ENCODE measurements at regions of chr1 and their contacts with region 1.

Region 1: GRCh38 chr1:211258756-211259637 is at the start of gene RCOR3:
- DNase-seq: peak; percentile 87 to 91 (median 89)
- H3K4me3 ChIP-seq: peak within 1 kb of the TSS; percentile 70 to 75
- H3K4me3 Mint-ChIP-seq: peak within 1 kb of the TSS; percentile 87 to 96 (median 91)
- H3K27ac ChIP-seq: peak within 1 kb of the TSS; percentile 77
- H3K27ac Mint-ChIP-seq: peak within 1 kb of the TSS; percentile 89 to 98 (median 92)
- H3K4me1 ChIP-seq: peaks cover 21% of the 10 kb centered on the region
- H3K4me1 Mint-ChIP-seq: peaks cover 10 to 26% (median 18%) of the 10 kb centered on the region in 4 donors
- H3K27me3 ChIP-seq: no peaks in the 10 kb centered on the region
- H3K27me3 Mint-ChIP-seq: no peaks in the 10 kb centered on the region
- total RNA-seq, gene RCOR3: 69.5 to 74.7 TPM

Region 2: GRCh38 chr1:210400043-210400840 is 858.8 kb before region 1 on chr1:
- CTCF ChIA-PET with region 1: no interaction called
- POLR2A ChIA-PET with region 1: no interaction called
- intact Hi-C with region 1: loop called (anchors 2 kb)
- DNase-seq: peak; percentile 45 to 57 (median 46)
- H3K4me3 ChIP-seq: no peak overlapping the region
- H3K4me3 Mint-ChIP-seq: peak overlapping the region in 6 of 8 donors; percentile 14 to 78 (median 70)
- H3K27ac ChIP-seq: no peak overlapping the region
- H3K27ac Mint-ChIP-seq: peak overlapping the region; percentile 70 to 91 (median 85)
- H3K4me1 ChIP-seq: peaks cover 16% of the 10 kb centered on the region
- H3K4me1 Mint-ChIP-seq: peaks cover 19 to 29% (median 23%) of the 10 kb centered on the region in 4 donors
- H3K27me3 ChIP-seq: no peaks in the 10 kb centered on the region
- H3K27me3 Mint-ChIP-seq: peaks cover 0 to 2% of the 10 kb centered on the region in 2 donors

Region 3: GRCh38 chr1:211133836-211134669 is 124.9 kb before region 1 on chr1 and contains the start of gene KCNH1:
- CTCF ChIA-PET with region 1: interaction called, 7 read pairs
- POLR2A ChIA-PET with region 1: no interaction called
- intact Hi-C with region 1: loop called (anchors 1 kb)
- DNase-seq: peak; percentile 67 to 76 (median 70)
- H3K4me3 ChIP-seq: peak within 1 kb of the TSS in 1 of 2 donors; percentile 19
- H3K4me3 Mint-ChIP-seq: peak within 1 kb of the TSS; percentile 74 to 83 (median 77)
- H3K27ac ChIP-seq: no peak within 1 kb of the TSS
- H3K27ac Mint-ChIP-seq: no peak within 1 kb of the TSS
- H3K4me1 ChIP-seq: peaks cover 17% of the 10 kb centered on the region
- H3K4me1 Mint-ChIP-seq: peaks cover 3 to 20% (median 7%) of the 10 kb centered on the region in 4 donors
- H3K27me3 ChIP-seq: peaks cover 17% of the 10 kb centered on the region
- H3K27me3 Mint-ChIP-seq: peaks cover 28 to 32% of the 10 kb centered on the region in 2 donors
- total RNA-seq, gene KCNH1: not detected

Region 4: GRCh38 chr1:211145944-211146343 is 113.1 kb before region 1 on chr1:
- CTCF ChIA-PET with region 1: no interaction called
- POLR2A ChIA-PET with region 1: no interaction called
- intact Hi-C with region 1: no loop called
- DNase-seq: no peak
- H3K4me3 ChIP-seq: no peak overlapping the region
- H3K4me3 Mint-ChIP-seq: no peak overlapping the region
- H3K27ac ChIP-seq: no peak overlapping the region
- H3K27ac Mint-ChIP-seq: no peak overlapping the region
- H3K4me1 ChIP-seq: no peaks in the 10 kb centered on the region
- H3K4me1 Mint-ChIP-seq: no peaks in the 10 kb centered on the region
- H3K27me3 ChIP-seq: no peaks in the 10 kb centered on the region
- H3K27me3 Mint-ChIP-seq: peaks cover 29% of the 10 kb centered on the region in 2 donors

Region 5: GRCh38 chr1:211285196-211285595 is 26.2 kb after region 1 on chr1:
- CTCF ChIA-PET with region 1: no interaction called
- POLR2A ChIA-PET with region 1: no interaction called
- intact Hi-C with region 1: no loop called
- DNase-seq: no peak
- H3K4me3 ChIP-seq: no peak overlapping the region
- H3K4me3 Mint-ChIP-seq: no peak overlapping the region
- H3K27ac ChIP-seq: no peak overlapping the region
- H3K27ac Mint-ChIP-seq: no peak overlapping the region
- H3K4me1 ChIP-seq: no peaks in the 10 kb centered on the region
- H3K4me1 Mint-ChIP-seq: peaks cover 5 to 10% (median 8%) of the 10 kb centered on the region in 4 donors
- H3K27me3 ChIP-seq: no peaks in the 10 kb centered on the region
- H3K27me3 Mint-ChIP-seq: no peaks in the 10 kb centered on the region

Region 6: DNA sequence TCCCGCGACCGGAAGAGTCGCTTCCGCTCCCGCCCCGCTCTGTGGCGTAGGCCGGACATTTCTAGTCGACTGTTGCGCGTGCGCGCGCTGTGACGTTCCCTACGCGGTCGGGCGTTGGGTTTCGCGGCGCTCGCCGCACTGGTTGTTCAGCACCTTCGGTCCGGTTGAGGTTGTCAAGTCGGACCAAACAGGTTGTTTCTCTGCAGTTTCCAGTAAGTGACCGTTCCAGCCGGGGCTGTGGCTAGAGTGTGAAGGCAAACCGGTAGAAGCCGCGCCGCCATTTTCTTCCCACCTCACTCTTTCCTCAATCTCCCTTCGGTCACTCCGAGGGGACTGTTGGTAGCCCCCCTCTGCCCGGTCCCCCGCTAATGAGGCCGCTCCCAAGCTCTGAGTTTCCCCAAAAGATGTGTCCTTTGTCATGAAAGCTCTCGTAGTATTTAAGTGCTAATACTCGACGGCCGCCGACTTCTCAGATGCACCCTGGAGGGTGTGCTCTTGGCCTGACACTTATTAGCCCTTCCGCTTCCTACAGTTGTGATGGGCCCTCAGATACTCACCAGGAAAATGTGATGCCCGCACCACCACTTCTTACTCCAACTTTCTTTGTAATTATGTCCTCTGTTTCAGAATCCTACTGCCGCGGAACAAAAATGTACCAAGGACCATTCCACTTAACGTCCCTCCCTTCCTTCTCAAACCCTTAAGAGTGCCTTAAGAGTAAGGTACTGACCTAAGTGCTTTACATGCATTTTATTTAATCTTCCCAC is 123.9 kb after region 1 on chr1:
- CTCF ChIA-PET with region 1: no interaction called
- POLR2A ChIA-PET with region 1: no interaction called
- intact Hi-C with region 1: loop called (anchors 2 kb)
- DNase-seq: peak; percentile 63 to 75 (median 64)
- H3K4me3 ChIP-seq: peak overlapping the region; percentile 75 to 84
- H3K4me3 Mint-ChIP-seq: peak overlapping the region; percentile 93 to 97 (median 96)
- H3K27ac ChIP-seq: peak overlapping the region; percentile 82
- H3K27ac Mint-ChIP-seq: peak overlapping the region; percentile 93 to 98 (median 97)
- H3K4me1 ChIP-seq: peaks cover 16% of the 10 kb centered on the region
- H3K4me1 Mint-ChIP-seq: peaks cover 16 to 35% (median 28%) of the 10 kb centered on the region in 4 donors
- H3K27me3 ChIP-seq: no peaks in the 10 kb centered on the region
- H3K27me3 Mint-ChIP-seq: no peaks in the 10 kb centered on the region

Region 7: GRCh38 chr1:211643324-211644212 is 384.6 kb after region 1 on chr1:
- CTCF ChIA-PET with region 1: no interaction called
- POLR2A ChIA-PET with region 1: no interaction called
- intact Hi-C with region 1: no loop called
- DNase-seq: peak in 3 of 5 donors; percentile 11 to 24 (median 18)
- H3K4me3 ChIP-seq: no peak overlapping the region
- H3K4me3 Mint-ChIP-seq: peak overlapping the region in 3 of 8 donors; percentile 2 to 40 (median 13)
- H3K27ac ChIP-seq: no peak overlapping the region
- H3K27ac Mint-ChIP-seq: peak overlapping the region in 1 of 7 donors; percentile 1
- H3K4me1 ChIP-seq: peaks cover 11% of the 10 kb centered on the region
- H3K4me1 Mint-ChIP-seq: peaks cover 8 to 14% (median 10%) of the 10 kb centered on the region in 4 donors
- H3K27me3 ChIP-seq: no peaks in the 10 kb centered on the region
- H3K27me3 Mint-ChIP-seq: peaks cover 0 to 2% of the 10 kb centered on the region in 2 donors